PC-3 (cell line): ENCODE measurements at regions of chr3 and their contacts with region 1.

Region 1: DNA sequence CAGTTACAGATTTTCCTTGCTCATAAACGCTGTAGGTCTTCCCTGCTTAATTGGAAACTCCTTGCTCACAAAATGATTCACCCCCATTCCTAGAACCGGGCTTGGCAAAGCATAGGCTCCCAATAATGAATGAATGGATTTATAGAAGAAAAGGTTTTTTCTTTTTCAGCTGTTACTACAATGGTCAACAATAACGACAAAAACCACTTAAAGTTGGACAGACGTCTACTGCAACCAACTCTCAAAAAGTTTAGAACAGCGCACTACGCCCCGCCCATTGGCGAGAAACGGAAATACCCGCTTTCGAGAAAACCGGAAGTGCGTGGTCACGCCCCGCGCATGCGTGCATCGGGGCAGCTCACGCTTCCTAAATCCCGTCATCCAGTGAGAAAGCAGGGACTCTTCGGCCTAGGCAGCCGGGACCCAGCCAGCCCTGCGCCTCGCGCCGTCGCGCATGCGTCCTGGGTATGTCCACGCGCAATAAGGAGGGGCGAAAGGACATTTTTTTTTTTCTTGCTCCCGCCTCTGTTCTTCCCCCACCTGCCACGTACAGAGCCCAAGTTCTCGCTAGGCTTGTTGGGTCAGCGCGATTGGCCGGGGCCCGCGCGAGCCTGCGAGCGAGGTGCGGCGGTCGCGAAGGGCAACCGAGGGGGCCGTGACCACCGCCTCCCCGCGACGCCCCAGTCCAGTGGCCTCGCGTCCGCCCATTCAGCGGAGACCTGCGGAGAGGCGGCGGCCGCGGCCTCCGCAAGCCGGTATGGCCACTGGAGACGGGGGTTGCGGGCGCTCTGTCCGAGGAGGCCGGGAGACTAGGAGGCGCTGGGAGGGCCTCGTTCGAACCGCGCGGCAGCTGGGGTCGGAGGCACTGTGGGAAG is at the start of gene TFG:
- DNase-seq: peak; percentile 100
- ATAC-seq: peak; percentile 89
- H3K4me3 ChIP-seq: peak within 1 kb of the TSS; percentile 80
- H3K27ac ChIP-seq: peak within 1 kb of the TSS; percentile 93
- H3K4me1 ChIP-seq: peaks cover 21% of the 10 kb centered on the region
- H3K27me3 ChIP-seq: no peaks in the 10 kb centered on the region
- CTCF ChIP-seq: no peak
- total RNA-seq, gene TFG: 97.9 and 106 TPM in 2 replicates

Region 2: DNA sequence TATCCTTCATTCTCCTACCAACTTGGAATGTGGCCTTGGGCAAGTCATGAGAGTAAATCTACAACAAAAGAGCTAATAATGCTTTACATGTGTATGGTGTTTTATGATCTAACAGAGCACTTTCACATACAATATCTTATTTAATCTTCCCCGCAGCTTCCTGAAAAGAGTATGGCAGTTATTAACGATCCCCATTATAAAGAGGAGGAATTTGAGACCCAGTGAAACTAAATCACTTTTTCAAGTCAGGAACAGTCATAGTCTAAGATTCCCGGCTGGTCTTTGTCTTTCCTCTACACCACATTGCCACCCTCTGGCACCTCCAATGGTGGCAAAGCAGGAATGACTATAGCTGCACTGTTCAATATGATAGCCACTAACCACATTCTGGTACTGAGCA is 961.3 kb before region 1 on chr3:
- CTCF ChIA-PET with region 1: no interaction called
- POLR2A ChIA-PET with region 1: no interaction called
- intact Hi-C with region 1: no loop called
- DNase-seq: peak; percentile 81
- ATAC-seq: peak; percentile 94
- H3K4me3 ChIP-seq: no peak overlapping the region
- H3K27ac ChIP-seq: no peak overlapping the region
- H3K4me1 ChIP-seq: peaks cover 23% of the 10 kb centered on the region
- H3K27me3 ChIP-seq: no peaks in the 10 kb centered on the region
- CTCF ChIP-seq: peak; percentile 90

Region 3: DNA sequence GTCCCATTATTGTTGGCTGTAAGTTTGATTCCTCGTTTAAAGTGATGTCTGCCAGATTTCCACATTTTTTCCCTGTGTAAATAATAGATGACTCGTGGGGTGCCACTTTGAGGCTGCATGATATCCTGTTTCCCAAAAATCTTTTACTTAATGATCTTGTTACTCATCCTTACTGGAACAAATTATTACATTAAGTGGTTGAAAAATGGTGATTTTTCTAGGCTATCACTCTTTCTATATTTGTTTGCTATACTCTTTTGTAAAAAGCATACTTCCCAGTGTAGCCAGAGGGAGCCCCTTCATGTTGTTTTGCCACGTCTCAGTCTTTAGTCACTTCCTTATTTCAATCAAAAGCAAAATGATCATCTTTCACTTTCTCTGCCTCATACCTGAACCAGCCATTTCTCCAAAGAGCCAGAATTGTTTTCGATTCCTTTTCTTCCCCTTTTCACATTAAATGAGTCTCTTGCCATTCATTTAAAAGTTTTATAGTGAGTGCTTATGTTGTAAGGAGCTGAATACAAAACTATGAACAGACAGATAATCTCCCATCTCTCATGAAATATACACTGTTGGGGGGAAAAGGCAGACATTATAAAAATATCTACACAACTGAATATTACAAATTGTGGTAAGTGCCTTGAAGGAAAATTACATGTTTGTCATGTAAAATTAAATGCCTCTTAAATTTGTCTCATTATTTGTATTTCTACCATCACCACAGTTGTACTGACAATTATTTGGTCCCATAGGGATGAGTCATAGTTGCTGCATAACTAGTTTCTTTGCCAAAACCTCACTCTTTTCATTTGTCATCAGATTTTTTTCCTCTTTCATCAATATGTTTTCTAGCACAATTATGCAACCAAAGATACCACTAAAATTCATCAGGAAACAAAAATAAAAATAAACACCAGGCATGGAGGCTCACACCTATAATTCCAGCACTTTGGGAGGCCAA is 58.3 kb before region 1 on chr3:
- CTCF ChIA-PET with region 1: interaction called, 5 read pairs
- POLR2A ChIA-PET with region 1: no interaction called
- intact Hi-C with region 1: loop called (anchors 1 kb)
- DNase-seq: peak; percentile 90
- ATAC-seq: peak; percentile 86
- H3K4me3 ChIP-seq: peak overlapping the region; percentile 61
- H3K27ac ChIP-seq: peak overlapping the region; percentile 90
- H3K4me1 ChIP-seq: peaks cover 24% of the 10 kb centered on the region
- H3K27me3 ChIP-seq: no peaks in the 10 kb centered on the region
- CTCF ChIP-seq: peak; percentile 55

Region 4: DNA sequence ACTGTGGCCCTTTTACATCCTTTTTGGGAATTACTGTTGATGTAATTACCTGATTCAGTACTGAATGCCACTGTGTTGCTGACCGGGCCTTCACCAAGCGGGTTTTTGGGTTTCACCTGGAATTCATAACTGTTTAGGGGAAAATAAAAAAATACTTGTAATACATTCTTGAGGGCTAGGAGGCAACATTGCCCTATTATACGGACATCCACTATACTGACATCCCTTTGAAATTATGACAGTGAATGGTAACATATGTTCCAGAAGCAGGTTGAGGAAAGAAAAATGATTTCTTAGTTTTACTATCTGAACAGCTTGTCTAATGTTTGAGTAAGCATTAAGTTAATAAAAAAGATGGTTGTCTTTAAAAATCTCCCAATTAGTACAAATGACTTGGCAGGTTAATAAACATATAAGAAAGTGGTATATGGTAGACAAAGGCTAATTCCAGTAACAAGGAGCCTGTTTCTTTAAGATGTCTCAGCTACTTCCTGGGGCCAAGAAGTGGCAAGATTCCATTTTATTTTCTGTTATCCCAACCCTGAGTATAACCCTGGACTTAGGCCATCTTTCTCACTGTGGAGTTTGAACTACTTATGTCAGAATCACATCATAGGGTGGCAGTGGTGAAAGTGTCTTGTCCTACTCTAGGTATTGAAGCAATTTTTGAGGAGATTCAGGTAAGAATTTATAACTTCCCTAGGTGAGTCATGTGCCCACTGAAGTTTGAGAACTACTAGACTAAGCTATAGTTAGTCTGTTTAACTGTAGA is 45.5 kb after region 1 on chr3:
- CTCF ChIA-PET with region 1: no interaction called
- POLR2A ChIA-PET with region 1: no interaction called
- intact Hi-C with region 1: no loop called
- DNase-seq: no peak
- ATAC-seq: peak; percentile 15; the same call in 1 of the 2 replicates
- H3K4me3 ChIP-seq: no peak overlapping the region
- H3K27ac ChIP-seq: no peak overlapping the region
- H3K4me1 ChIP-seq: no peaks in the 10 kb centered on the region
- H3K27me3 ChIP-seq: no peaks in the 10 kb centered on the region
- CTCF ChIP-seq: peak; percentile 40; the same call in 1 of the 2 replicates